ENCODE measurements at regions of chr5 and their contacts with region 1.

Region 1: DNA sequence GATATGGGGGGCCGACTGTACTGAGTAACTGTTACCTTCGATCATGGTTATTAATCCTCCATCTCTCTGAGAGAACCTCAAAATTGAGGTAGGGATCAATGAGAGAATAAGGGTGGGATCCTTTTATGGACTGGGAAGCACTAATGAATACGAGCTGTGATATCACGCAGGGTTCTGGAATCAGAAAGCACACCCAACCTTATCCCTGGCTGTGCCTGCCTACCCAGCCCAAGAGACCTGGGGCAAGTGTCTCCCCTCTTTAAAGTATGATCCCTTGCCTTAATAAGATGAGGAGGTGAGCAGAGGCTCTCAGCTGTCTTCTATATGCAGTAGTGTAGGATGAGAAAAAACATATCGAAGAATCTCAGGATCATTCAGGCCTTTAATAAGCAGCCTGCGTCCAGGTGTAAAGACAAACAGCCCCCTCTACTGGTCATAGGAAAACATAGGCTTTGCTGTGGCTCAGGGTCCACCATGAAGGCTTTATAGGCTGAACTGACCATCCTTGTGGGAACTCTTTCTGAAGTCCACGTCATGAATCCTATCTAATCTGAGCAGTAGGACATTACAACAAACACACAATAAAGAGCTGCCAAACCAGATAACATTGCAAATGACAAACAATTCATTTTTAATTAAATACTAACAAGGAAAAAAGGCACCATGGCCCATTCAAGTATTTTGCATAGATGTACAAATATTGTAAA is 16.8 kb downstream of the NIPAL4 start:
- DNase-seq: peak in 1 of 2 donors; percentile 33
- ATAC-seq: peak in 7 of 8 donors; percentile 44 to 61 (median 56)
- H3K4me3 ChIP-seq: no peak overlapping the region
- H3K27ac ChIP-seq: no peak overlapping the region
- H3K4me1 ChIP-seq: peaks cover 0 to 33% (median 19%) of the 10 kb centered on the region in 9 donors
- H3K27me3 ChIP-seq: no peaks in the 10 kb centered on the region
- CTCF ChIP-seq: peak; percentile 34 to 78 (median 72)

Region 2: DNA sequence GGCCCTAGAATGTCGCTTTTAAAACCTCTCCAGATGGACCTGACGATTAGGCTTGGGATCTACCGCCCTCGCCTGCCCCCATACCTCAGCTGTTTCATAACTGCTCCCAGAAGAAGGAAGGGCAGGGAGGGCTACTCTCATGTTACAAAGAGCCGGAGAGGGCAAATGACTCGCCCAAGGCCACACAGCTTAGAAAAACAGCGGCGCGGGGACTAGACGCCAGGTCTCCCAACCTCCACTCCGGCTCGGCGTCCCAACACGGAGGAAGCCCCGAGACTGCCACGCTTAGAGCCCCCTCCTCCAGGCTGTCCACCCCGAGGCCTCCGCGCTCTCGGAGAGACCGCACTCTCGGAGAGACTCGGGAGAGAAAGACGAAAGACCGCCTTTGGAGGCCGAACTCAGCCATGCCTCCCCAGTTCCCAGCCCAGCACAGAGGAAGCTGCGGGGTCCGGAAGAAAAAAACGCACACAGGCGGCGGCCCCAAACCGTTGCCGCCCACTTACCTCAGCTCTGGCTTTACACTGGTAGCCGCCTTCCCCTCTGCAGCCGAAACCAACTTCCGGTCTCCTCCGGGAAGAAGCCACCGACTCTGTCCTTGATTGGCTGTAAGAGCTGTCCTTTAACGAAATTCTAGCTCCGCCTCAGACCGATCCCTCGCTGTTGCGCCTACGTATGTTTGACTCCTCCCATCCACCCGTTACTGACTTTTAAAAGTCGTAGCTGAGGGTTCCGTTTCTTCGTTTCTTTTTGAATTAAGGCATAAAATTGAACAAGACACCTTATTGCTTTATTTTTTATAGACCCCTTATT is 334.3 kb before region 1 on chr5 and contains the start of gene MED7:
- intact Hi-C with region 1: loop called in 1 of 10 experiments (anchors 10 kb)
- DNase-seq: peak; percentile 83 to 98
- ATAC-seq: peak; percentile 97 to 99 (median 99)
- H3K4me3 ChIP-seq: peak within 1 kb of the TSS; percentile 77 to 96 (median 88)
- H3K27ac ChIP-seq: peak within 1 kb of the TSS; percentile 83 to 96 (median 90)
- H3K4me1 ChIP-seq: peaks cover 0 to 18% (median 14%) of the 10 kb centered on the region in 9 donors
- H3K27me3 ChIP-seq: no peaks in the 10 kb centered on the region
- CTCF ChIP-seq: no peak
- total RNA-seq, gene MED7: 7.3 to 11.5 (median 9.3) TPM

Region 3: DNA sequence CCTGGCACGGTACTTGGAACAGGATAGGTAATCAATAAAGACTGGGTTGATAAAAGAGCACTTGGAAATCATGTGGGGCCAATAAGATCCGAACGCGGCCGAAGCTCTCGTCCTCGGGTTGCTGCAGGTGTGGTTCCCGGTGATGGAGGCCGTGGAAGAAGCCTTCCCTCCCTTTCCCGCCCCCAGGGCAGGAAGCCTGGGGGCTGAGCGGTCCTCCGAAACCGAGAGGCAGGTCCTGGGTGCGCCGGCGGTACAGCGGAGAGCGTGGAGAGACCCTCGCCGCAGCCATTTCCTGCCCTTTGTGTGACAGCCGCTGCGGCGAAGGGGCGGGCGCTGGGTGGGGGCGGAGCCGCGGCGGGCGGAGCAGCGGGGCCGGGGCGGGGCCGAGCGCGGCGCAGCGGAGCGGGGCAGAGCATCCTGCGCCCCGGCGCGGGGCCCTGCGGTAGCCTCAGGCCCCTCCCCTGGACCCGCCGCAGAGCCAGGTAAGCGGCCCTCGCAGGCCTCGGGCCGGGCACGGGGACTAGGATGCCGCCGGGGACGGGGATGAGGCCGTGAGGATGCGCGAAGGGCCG is 211.1 kb before region 1 on chr5 and contains the start of gene CYFIP2:
- intact Hi-C with region 1: no loop called
- DNase-seq: peak in 1 of 2 donors; percentile 70
- ATAC-seq: peak; percentile 73 to 92 (median 80)
- H3K4me3 ChIP-seq: peak within 1 kb of the TSS; percentile 16 to 82 (median 68)
- H3K27ac ChIP-seq: peak within 1 kb of the TSS; percentile 43 to 90 (median 74)
- H3K4me1 ChIP-seq: peaks cover 0 to 61% (median 15%) of the 10 kb centered on the region in 9 donors
- H3K27me3 ChIP-seq: peaks cover 0 to 6% (median 0%) of the 10 kb centered on the region in 7 donors
- CTCF ChIP-seq: no peak
- total RNA-seq, gene CYFIP2: 20.3 to 50.8 (median 34.4) TPM

Region 4: DNA sequence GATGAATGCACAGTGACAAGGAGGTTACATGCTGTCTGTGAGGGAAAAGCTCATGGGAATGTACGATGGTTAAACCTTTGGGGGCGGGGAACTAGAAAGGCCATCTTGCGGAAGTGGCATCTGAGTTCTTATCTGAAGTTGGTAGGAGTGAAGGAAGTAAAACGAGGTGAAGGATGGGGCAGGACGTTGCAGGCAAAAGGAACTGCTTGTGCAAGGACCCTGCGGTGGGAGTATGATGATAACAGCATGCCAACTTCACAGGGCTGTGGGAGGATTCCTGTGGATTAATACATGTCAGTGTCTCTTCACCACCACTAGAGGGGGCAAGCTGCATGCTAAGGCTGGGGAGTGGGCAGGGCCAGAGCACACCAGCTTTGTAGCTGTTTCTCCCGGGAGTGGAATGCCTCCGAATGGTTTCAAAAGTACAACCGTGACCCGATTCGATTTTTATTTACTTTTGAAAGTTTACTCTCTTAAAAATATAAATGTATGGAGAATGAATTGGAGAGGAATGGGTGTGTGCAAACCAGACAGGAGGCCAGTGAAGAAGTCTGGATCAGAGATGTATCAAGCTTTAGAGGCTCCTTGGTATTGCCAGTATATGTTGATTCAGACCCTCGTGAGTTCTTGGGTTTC is 148.5 kb before region 1 on chr5:
- intact Hi-C with region 1: loop called in 7 of 10 experiments (anchors 1 to 10 kb)
- DNase-seq: peak; percentile 32 to 61
- ATAC-seq: peak; percentile 89 to 96 (median 94)
- H3K4me3 ChIP-seq: peak overlapping the region in 6 of 10 donors; percentile 8 to 37 (median 22)
- H3K27ac ChIP-seq: peak overlapping the region in 1 of 10 donors; percentile 36
- H3K4me1 ChIP-seq: peaks cover 0 to 11% (median 0%) of the 10 kb centered on the region in 9 donors
- H3K27me3 ChIP-seq: no peaks in the 10 kb centered on the region
- CTCF ChIP-seq: peak; percentile 87 to 95 (median 93)

Region 5: GRCh38 chr5:157335534-157336422 is 141.1 kb before region 1 on chr5:
- intact Hi-C with region 1: loop called in 1 of 10 experiments (anchors 10 kb)
- DNase-seq: no peak
- ATAC-seq: peak in 4 of 8 donors; percentile 26 to 76 (median 51)
- H3K4me3 ChIP-seq: no peak overlapping the region
- H3K27ac ChIP-seq: peak overlapping the region in 1 of 10 donors; percentile 26
- H3K4me1 ChIP-seq: peaks cover 0 to 9% (median 0%) of the 10 kb centered on the region in 9 donors
- H3K27me3 ChIP-seq: no peaks in the 10 kb centered on the region
- CTCF ChIP-seq: no peak

Region 6: GRCh38 chr5:157366741-157367674 is 109.8 kb before region 1 on chr5:
- intact Hi-C with region 1: loop called in 4 of 10 experiments (anchors 10 kb)
- DNase-seq: peak in 1 of 2 donors; percentile 28
- ATAC-seq: peak in 5 of 8 donors; percentile 47 to 63 (median 60)
- H3K4me3 ChIP-seq: no peak overlapping the region
- H3K27ac ChIP-seq: no peak overlapping the region
- H3K4me1 ChIP-seq: peaks cover 0 to 12% (median 5%) of the 10 kb centered on the region in 9 donors
- H3K27me3 ChIP-seq: no peaks in the 10 kb centered on the region
- CTCF ChIP-seq: peak in 7 of 9 donors; percentile 33 to 62 (median 51)

Region 7: DNA sequence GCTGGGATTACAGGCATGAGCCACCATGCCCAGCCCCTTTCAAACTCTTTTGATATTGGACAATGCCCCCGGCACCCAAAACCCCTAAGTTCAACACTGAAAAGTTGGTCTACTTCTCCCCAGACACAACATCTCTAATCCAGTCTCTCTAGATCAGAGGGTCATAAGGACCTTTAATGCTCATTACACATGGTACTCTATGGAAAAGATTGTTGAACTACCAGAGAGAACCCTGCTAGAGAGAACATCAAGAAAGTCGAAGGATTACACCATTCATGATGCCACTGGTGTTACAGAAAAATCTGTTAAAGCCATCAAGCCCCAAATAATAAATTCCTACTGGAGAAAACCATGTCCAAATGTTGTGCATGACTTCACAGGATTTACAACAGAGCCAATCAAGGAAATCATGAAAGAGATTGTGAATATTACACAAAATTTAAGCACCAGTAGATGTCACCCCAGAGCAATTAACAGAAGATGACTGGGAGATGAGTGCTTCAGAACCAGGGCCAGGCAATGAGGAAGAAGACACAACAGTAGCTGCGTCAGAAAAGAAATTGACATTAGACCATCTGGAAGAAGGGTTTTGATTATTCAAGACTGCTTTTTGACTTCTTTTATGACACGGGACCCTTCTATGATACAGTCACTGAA is 45.2 kb before region 1 on chr5:
- intact Hi-C with region 1: loop called in 8 of 10 experiments (anchors 1 to 5 kb)
- DNase-seq: peak in 1 of 2 donors; percentile 45
- ATAC-seq: peak in 7 of 8 donors; percentile 70 to 88 (median 82)
- H3K4me3 ChIP-seq: no peak overlapping the region
- H3K27ac ChIP-seq: no peak overlapping the region
- H3K4me1 ChIP-seq: peaks cover 0 to 6% (median 0%) of the 10 kb centered on the region in 9 donors
- H3K27me3 ChIP-seq: no peaks in the 10 kb centered on the region
- CTCF ChIP-seq: peak; percentile 33 to 74 (median 60)

Measured in heart right ventricle (tissue), 16 donors.